ENCODE measurements at regions of chr5 and their contacts with region 1.

Region 1: GRCh38 chr5:95664204-95664786 is 17.7 kb downstream of the RFESD start:
- DNase-seq: no peak
- H3K4me3 ChIP-seq: no peak overlapping the region
- H3K27ac ChIP-seq: peak overlapping the region; percentile 20
- H3K4me1 ChIP-seq: peaks cover 16% of the 10 kb centered on the region
- H3K27me3 ChIP-seq: no peaks in the 10 kb centered on the region
- CTCF ChIP-seq: peak; percentile 85

Region 2: DNA sequence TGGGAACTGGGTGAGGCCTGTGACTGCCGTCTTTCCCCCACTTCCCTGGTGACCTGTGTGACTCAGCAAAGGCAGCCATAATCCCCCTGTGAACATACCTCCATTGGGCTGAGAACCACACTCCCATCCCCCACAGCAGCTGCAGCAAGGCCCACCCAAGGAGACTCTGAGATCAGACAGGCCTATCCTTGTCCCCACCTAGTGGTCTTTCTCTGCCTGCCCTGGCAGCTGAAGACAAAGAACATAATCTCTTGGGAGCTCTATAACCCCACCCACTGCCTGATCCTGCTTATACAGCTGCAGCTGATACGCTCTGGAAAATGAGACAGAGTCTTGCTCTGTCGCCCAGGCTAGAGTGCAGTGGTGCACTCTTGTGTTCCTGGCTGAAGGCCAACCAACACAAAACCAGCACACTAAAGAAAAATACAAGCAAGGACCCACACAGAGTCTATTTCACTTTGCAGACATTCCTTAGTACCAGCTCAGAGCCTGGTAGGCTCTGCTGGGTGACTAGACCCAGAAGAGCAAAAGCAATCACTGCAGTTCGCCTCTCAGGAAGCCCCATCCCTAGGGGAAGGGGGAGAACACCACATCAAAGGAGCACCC is 486.1 kb before region 1 on chr5:
- intact Hi-C with region 1: no loop called
- DNase-seq: no peak
- H3K4me3 ChIP-seq: no peak overlapping the region
- H3K27ac ChIP-seq: no peak overlapping the region
- H3K4me1 ChIP-seq: no peaks in the 10 kb centered on the region
- H3K27me3 ChIP-seq: no peaks in the 10 kb centered on the region
- CTCF ChIP-seq: peak; percentile 30

Region 3: GRCh38 chr5:95730730-95731570 is 66.7 kb after region 1 on chr5 and contains the start of gene RHOBTB3:
- intact Hi-C with region 1: loop called (anchors 10 kb)
- DNase-seq: peak; percentile 93
- H3K4me3 ChIP-seq: peak within 1 kb of the TSS; percentile 89
- H3K27ac ChIP-seq: peak within 1 kb of the TSS; percentile 97
- H3K4me1 ChIP-seq: peaks cover 90% of the 10 kb centered on the region
- H3K27me3 ChIP-seq: no peaks in the 10 kb centered on the region
- CTCF ChIP-seq: no peak
- total RNA-seq, gene RHOBTB3: 79.7 TPM

Region 4: GRCh38 chr5:95773335-95774059 is 109.2 kb after region 1 on chr5:
- intact Hi-C with region 1: loop called (anchors 10 kb)
- DNase-seq: no peak
- H3K4me3 ChIP-seq: no peak overlapping the region
- H3K27ac ChIP-seq: peak overlapping the region; percentile 11
- H3K4me1 ChIP-seq: peaks cover 35% of the 10 kb centered on the region
- H3K27me3 ChIP-seq: no peaks in the 10 kb centered on the region
- CTCF ChIP-seq: no peak

Region 5: DNA sequence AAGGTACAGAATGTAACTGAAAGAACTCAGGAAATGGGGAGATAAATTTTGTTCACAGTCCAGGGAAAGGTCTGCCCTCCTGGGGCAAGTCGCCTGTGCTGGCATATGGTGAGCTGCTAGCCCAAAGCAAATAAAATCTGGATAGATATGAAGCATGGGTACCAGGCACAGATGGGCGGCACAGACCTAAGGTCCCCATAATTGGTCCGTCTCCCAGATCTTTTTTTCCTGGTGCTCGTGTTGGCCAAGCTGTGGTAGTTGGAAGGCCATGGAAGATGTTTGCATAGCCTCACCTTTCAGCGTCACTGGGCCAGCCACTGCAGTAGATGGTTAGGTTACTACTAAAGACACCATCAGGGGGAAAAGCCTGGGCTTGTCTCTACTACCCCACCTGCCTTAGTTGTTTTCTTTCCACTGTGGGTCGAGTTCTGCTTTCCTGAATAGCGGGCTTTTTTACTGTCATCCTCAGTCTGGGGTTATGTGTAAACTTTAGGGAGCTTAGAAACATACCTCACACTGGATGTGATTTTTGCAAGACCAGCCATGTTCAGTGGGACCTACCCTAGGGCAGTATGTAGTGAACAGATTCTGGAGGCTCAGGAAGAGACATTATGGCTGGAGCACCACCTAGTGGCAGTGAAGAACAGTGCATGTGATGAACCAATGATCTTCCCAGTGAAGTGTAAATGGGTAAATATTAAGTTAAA is 182.4 kb after region 1 on chr5:
- intact Hi-C with region 1: loop called (anchors 5 kb)
- DNase-seq: peak; percentile 32
- H3K4me3 ChIP-seq: no peak overlapping the region
- H3K27ac ChIP-seq: no peak overlapping the region
- H3K4me1 ChIP-seq: peaks cover 25% of the 10 kb centered on the region
- H3K27me3 ChIP-seq: no peaks in the 10 kb centered on the region
- CTCF ChIP-seq: peak; percentile 98

Region 6: DNA sequence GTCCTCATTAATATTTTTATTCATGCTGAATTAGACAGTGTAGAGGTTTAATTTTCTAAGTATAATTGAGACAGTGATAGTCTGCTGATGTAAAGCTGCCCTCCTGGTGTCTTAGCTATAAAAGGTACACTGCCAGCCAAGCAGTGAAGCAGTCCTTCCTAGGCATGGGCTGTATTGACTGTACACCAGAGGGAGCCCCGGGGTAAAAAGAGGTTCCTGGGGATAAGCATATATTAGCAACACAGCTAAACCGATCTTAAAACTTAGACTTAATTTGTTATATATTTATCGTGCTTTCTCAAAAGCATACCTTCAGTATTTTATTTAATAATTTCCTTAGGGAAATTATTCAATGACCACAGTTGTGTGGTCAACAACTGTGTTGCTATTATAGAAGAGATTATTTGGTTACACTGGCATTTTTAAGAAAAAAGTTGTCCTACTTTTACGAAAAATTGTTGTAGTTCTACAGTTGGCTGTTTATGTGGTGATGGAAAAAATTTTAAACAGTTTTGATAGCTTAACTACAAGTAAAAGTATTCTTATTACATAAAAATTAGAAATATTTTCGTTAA is 228.6 kb after region 1 on chr5:
- intact Hi-C with region 1: no loop called
- DNase-seq: no peak
- H3K4me3 ChIP-seq: no peak overlapping the region
- H3K27ac ChIP-seq: no peak overlapping the region
- H3K4me1 ChIP-seq: peaks cover 27% of the 10 kb centered on the region
- H3K27me3 ChIP-seq: no peaks in the 10 kb centered on the region
- CTCF ChIP-seq: peak; percentile 59